Breast epithelium (tissue), 4 donors: ENCODE measurements at regions of chr15 and their contacts with region 1.

Region 1: GRCh38 chr15:31843426-31844055 is 186.8 kb upstream of the CHRNA7 start:
- DNase-seq: no peak
- H3K4me3 ChIP-seq: no peak overlapping the region
- H3K27ac ChIP-seq: no peak overlapping the region
- H3K4me1 ChIP-seq: no peaks in the 10 kb centered on the region
- H3K27me3 ChIP-seq: no peaks in the 10 kb centered on the region
- CTCF ChIP-seq: no peak
- POLR2A ChIP-seq: no peak

Region 2: DNA sequence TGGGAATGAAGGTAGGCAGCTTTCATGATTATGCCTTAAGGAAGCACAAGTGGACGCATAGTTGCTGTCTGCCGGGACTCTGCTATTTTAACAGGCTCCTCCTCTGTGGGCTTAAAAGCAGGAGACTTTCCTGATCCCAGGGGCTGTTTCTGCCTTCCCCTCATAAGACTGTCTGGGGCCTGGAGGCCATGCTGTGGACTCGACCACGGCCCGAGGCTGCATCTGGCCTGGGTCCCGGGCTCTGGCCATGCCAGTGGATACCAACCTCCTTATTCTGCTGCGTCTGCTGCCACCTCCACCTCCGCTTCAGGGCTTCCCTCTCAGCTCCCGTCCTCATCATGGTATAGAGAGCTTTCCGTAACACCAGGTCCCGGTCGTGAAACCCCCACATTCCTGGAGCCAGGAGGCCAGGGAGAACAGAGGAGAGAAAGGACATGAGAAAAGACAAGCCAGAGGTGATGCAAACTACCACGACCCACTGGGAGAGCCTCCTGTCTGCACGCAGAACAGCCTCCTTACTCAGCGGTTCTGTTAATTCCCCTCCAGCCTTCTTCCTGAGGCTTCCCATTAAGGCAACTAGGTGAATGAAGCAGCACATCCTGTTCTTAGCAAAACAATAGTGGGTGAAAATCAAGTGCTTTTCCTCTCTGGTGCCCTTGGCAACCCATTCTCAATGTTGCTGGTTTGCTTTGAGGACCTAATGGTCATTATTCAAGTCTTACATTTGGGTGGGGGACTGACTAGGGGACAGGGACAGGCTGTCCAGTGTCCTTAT is 316.4 kb before region 1 on chr15:
- intact Hi-C with region 1: no loop called
- DNase-seq: peak in 1 of 2 donors; percentile 3
- H3K4me3 ChIP-seq: peak overlapping the region in 1 of 3 donors; percentile 1
- H3K27ac ChIP-seq: peak overlapping the region in 1 of 2 donors; percentile 12
- H3K4me1 ChIP-seq: no peaks in the 10 kb centered on the region
- H3K27me3 ChIP-seq: no peaks in the 10 kb centered on the region
- CTCF ChIP-seq: no peak
- POLR2A ChIP-seq: no peak

Region 3: DNA sequence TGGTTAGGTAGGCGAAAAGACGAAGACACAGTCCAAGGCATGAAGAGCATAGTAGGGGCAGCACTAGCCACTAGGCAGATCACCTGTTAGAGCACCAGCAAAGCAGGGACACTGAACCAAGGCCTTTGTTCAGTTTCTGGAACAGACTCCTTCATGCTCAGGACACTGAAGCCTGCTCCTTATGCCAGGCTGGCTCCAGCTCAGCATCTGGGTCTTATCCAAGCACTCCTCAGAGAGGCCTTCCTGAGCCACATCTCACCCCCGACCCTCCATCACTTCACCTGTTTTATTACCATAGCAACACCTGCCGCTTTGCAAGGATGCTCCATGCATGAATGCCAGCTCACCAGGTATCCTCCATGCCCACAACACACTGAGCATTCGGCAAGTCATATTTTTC is 19.5 kb before region 1 on chr15:
- intact Hi-C with region 1: no loop called
- DNase-seq: no peak
- H3K4me3 ChIP-seq: no peak overlapping the region
- H3K27ac ChIP-seq: no peak overlapping the region
- H3K4me1 ChIP-seq: no peaks in the 10 kb centered on the region
- H3K27me3 ChIP-seq: no peaks in the 10 kb centered on the region
- CTCF ChIP-seq: no peak
- POLR2A ChIP-seq: no peak

Region 4: GRCh38 chr15:31858026-31858425 is 14.5 kb after region 1 on chr15:
- intact Hi-C with region 1: loop called (anchors 2 kb)
- DNase-seq: no peak
- H3K4me3 ChIP-seq: no peak overlapping the region
- H3K27ac ChIP-seq: no peak overlapping the region
- H3K4me1 ChIP-seq: no peaks in the 10 kb centered on the region
- H3K27me3 ChIP-seq: no peaks in the 10 kb centered on the region
- CTCF ChIP-seq: no peak
- POLR2A ChIP-seq: no peak